Activated T-helper 1 cell treated with anti-CD3 and anti-CD28 coated beads, Interleukin-12 subunit alpha, Interleukin-12 subunit beta, Interleukin-2, Interleukin-4 antibody, amounts not matched to agents 30 ng/mL and 10 ng/mL and 1 ng/mL, durations not matched to agents 14 hours and 24 hours and 36 hours (primary cell): ENCODE measurements at regions of chr6 and their contacts with region 1.

Region 1: GRCh38 chr6:149354009-149354408 is 36.5 kb downstream of the TAB2 start:
- DNase-seq: no peak
- H3K4me3 Mint-ChIP-seq: no peak overlapping the region
- H3K27ac Mint-ChIP-seq: no peak overlapping the region
- H3K4me1 Mint-ChIP-seq: peaks cover 74% of the 10 kb centered on the region
- H3K27me3 Mint-ChIP-seq: no peaks in the 10 kb centered on the region

Region 2: GRCh38 chr6:149342525-149342924 is 11.5 kb before region 1 on chr6:
- intact Hi-C with region 1: loop called (anchors 1 kb)
- DNase-seq: no peak
- H3K4me3 Mint-ChIP-seq: peak overlapping the region; percentile 59
- H3K27ac Mint-ChIP-seq: peak overlapping the region; percentile 83
- H3K4me1 Mint-ChIP-seq: peaks cover 88% of the 10 kb centered on the region
- H3K27me3 Mint-ChIP-seq: no peaks in the 10 kb centered on the region

Region 3: DNA sequence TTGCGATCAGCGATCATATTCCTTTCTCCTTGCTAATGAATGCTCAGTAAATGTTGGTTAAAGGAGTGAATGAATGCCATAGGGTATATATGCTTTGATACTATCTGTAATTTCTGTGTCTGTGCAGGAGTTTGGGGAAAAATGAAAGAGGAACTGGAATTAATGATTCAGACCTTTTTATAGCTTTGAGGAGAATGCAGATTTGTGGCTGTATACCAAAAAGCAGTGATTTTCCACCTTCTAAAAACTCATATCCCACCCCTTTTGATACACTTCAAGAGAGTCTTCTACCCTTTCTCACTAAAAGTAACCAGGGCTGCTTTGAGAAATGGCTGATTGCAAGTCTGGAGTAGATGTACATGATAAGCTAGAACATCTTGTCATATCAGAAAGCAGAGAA is 19.5 kb after region 1 on chr6:
- intact Hi-C with region 1: loop called (anchors 2 kb)
- DNase-seq: no peak
- H3K4me3 Mint-ChIP-seq: peak overlapping the region; percentile 23
- H3K27ac Mint-ChIP-seq: peak overlapping the region; percentile 78
- H3K4me1 Mint-ChIP-seq: peaks cover 58% of the 10 kb centered on the region
- H3K27me3 Mint-ChIP-seq: no peaks in the 10 kb centered on the region